ENCODE measurements at regions of chr6 and their contacts with region 1.

Region 1: GRCh38 chr6:39980839-39981580 is 46.7 kb upstream of the MOCS1 start:
- DNase-seq: peak in 1 of 2 donors; percentile 47
- ATAC-seq: peak; percentile 50 to 85 (median 78)
- H3K4me3 ChIP-seq: no peak overlapping the region
- H3K27ac ChIP-seq: peak overlapping the region in 4 of 10 donors; percentile 10 to 31 (median 22)
- H3K4me1 ChIP-seq: peaks cover 0 to 23% (median 4%) of the 10 kb centered on the region in 9 donors
- H3K27me3 ChIP-seq: peaks cover 0 to 5% (median 0%) of the 10 kb centered on the region in 7 donors
- CTCF ChIP-seq: peak in 8 of 9 donors; percentile 18 to 64 (median 49)

Region 2: GRCh38 chr6:40295251-40295949 is 314.4 kb after region 1 on chr6:
- intact Hi-C with region 1: loop called in 3 of 10 experiments (anchors 5 to 10 kb)
- DNase-seq: no peak
- ATAC-seq: no peak
- H3K4me3 ChIP-seq: no peak overlapping the region
- H3K27ac ChIP-seq: no peak overlapping the region
- H3K4me1 ChIP-seq: no peaks in the 10 kb centered on the region
- H3K27me3 ChIP-seq: peaks cover 0 to 55% (median 15%) of the 10 kb centered on the region in 7 donors
- CTCF ChIP-seq: no peak

Region 3: DNA sequence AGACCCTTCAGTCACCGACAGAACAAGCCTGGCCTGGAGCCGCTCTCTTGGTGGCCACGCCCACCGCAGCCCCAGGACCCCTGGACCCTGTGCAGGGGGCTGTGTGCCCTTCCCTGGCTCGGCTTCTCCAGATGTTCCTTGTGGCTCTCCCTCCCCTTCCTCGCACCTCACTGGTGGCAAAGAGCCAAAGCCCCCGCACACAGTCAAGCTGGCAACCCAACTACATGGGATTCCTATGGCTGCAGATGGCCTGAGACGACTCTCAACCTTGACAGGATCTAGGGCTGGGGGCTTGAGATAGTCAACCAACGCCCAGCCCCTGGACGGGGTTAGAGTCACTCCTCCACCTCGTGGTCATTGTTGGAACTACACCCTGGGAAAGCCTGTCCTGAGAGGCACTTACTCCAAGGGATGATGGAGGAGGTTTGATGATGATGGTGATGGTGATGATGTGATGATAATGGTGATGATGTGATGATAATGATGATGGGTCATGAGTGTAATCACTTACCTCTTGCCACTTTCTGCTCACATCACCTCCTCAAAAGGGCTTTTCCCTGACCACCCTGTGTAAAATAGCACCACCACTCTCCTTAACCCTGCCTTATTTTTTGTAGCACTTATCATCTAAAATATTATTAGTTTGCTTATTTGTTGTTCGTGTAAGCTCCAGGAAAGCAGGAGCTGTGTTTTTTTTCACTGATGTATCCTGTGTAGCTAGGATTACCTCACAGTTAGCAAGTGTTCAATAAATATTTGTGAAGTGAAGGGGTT is 327.7 kb after region 1 on chr6:
- intact Hi-C with region 1: loop called (anchors 1 to 10 kb)
- DNase-seq: peak; percentile 26 to 55
- ATAC-seq: peak in 5 of 8 donors; percentile 47 to 79 (median 69)
- H3K4me3 ChIP-seq: no peak overlapping the region
- H3K27ac ChIP-seq: no peak overlapping the region
- H3K4me1 ChIP-seq: peaks cover 0 to 5% (median 0%) of the 10 kb centered on the region in 9 donors
- H3K27me3 ChIP-seq: peaks cover 0 to 41% (median 18%) of the 10 kb centered on the region in 7 donors
- CTCF ChIP-seq: peak; percentile 72 to 90 (median 80)

Region 4: GRCh38 chr6:40587240-40588069 is 606.4 kb after region 1 on chr6 and contains the start of gene LRFN2:
- intact Hi-C with region 1: loop called in 1 of 10 experiments (anchors 10 kb)
- DNase-seq: peak; percentile 34 to 71
- ATAC-seq: peak; percentile 87 to 95 (median 90)
- H3K4me3 ChIP-seq: peak within 1 kb of the TSS in 9 of 10 donors; percentile 22 to 53 (median 43)
- H3K27ac ChIP-seq: peak within 1 kb of the TSS in 1 of 10 donors; percentile 15
- H3K4me1 ChIP-seq: peaks cover 0 to 20% (median 15%) of the 10 kb centered on the region in 9 donors
- H3K27me3 ChIP-seq: peaks cover 0 to 94% (median 83%) of the 10 kb centered on the region in 7 donors
- CTCF ChIP-seq: peak; percentile 19 to 71 (median 62)
- total RNA-seq, gene LRFN2: not detected

Region 5: GRCh38 chr6:40845553-40845952 is 864.5 kb after region 1 on chr6:
- intact Hi-C with region 1: loop called in 5 of 10 experiments (anchors 5 to 10 kb)
- DNase-seq: peak in 1 of 2 donors; percentile 35
- ATAC-seq: peak in 1 of 8 donors; percentile 29
- H3K4me3 ChIP-seq: no peak overlapping the region
- H3K27ac ChIP-seq: no peak overlapping the region
- H3K4me1 ChIP-seq: peaks cover 0 to 14% (median 0%) of the 10 kb centered on the region in 9 donors
- H3K27me3 ChIP-seq: peaks cover 0 to 28% (median 12%) of the 10 kb centered on the region in 7 donors
- CTCF ChIP-seq: peak; percentile 8 to 63 (median 52)

Region 6: DNA sequence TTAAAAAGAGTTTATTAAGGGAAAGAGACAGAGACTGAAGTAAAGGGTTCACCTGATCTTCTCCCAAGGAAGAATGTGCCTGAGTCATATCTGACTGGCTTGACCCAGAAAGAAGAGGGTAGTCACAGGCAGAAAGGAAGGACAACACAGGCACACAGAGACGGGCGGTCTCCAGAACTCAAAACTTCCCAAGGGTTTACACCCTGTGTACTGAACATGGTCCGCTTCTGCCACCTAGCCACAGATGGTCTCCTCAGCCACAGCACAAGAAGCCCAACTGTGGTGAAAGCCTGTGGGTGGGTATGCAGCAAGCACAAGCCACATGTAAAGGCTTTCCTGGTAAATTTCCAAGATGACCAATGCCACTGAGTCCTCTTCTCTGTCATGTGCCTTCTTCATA is 1040.8 kb after region 1 on chr6:
- intact Hi-C with region 1: loop called in 6 of 10 experiments (anchors 5 to 10 kb)
- DNase-seq: peak in 1 of 2 donors; percentile 25
- ATAC-seq: peak in 7 of 8 donors; percentile 56 to 90 (median 75)
- H3K4me3 ChIP-seq: no peak overlapping the region
- H3K27ac ChIP-seq: no peak overlapping the region
- H3K4me1 ChIP-seq: peaks cover 0 to 10% (median 0%) of the 10 kb centered on the region in 9 donors
- H3K27me3 ChIP-seq: no peaks in the 10 kb centered on the region
- CTCF ChIP-seq: peak in 6 of 9 donors; percentile 17 to 52 (median 40)